ENCODE measurements at regions of chr9 and their contacts with region 1.

Region 1: DNA sequence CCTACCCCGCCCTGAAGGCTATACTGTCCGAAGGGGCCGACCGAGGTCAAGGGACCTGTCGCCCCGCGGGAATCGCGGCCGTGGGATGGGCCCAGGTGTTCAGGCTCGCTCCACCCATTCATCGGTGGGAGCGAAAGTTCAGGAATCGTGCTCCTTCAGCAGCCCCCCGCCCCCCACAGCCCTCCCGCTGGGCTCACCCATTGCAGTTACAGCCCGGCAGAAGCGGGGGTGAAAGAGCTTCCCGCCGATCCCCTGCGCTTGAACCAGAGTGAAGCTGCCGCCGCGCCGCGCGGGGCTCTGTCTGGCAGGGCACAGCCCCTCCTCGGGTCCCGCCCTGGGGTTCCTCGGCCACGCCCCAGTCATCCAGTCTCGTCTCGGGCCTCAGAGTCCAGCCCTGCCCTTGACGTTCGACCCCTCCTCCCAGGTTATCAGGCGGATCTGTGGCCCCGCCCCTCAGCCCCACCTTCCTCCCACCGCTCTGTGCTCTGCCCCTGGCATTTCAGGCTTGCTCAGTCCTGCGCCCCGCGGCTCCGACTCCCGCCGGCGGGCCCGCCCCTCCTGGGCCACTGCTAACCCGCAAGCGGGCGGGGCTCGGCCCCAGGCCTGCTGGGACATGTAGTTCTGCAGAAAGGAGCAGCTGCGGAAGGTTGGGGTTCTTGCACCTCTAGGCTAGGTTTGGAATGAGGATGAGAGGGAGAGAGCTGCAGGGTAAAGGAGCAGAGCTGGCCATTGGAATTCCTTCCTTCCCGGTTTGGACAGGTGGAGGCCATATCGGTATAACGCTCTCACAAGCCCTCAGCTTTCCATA is at the start of gene MYORG:
- DNase-seq: peak; percentile 99
- ATAC-seq: peak; percentile 86
- H3K4me3 Mint-ChIP-seq: peak within 1 kb of the TSS; percentile 87
- H3K27ac Mint-ChIP-seq: peak within 1 kb of the TSS; percentile 82
- H3K4me1 Mint-ChIP-seq: peaks cover 30% of the 10 kb centered on the region
- H3K27me3 Mint-ChIP-seq: no peaks in the 10 kb centered on the region
- CTCF ChIP-seq: no peak
- total RNA-seq, gene MYORG: 4.1 to 5.5 TPM

Region 2: GRCh38 chr9:34048923-34049697 is 327.7 kb before region 1 on chr9:
- CTCF ChIA-PET with region 1: interaction called, 3 read pairs
- POLR2A ChIA-PET with region 1: interaction called, 5 read pairs
- intact Hi-C with region 1: loop called (anchors 10 kb)
- DNase-seq: peak; percentile 98
- ATAC-seq: peak; percentile 83
- H3K4me3 Mint-ChIP-seq: peak overlapping the region; percentile 87
- H3K27ac Mint-ChIP-seq: peak overlapping the region; percentile 100
- H3K4me1 Mint-ChIP-seq: peaks cover 28% of the 10 kb centered on the region
- H3K27me3 Mint-ChIP-seq: no peaks in the 10 kb centered on the region
- CTCF ChIP-seq: no peak

Region 3: DNA sequence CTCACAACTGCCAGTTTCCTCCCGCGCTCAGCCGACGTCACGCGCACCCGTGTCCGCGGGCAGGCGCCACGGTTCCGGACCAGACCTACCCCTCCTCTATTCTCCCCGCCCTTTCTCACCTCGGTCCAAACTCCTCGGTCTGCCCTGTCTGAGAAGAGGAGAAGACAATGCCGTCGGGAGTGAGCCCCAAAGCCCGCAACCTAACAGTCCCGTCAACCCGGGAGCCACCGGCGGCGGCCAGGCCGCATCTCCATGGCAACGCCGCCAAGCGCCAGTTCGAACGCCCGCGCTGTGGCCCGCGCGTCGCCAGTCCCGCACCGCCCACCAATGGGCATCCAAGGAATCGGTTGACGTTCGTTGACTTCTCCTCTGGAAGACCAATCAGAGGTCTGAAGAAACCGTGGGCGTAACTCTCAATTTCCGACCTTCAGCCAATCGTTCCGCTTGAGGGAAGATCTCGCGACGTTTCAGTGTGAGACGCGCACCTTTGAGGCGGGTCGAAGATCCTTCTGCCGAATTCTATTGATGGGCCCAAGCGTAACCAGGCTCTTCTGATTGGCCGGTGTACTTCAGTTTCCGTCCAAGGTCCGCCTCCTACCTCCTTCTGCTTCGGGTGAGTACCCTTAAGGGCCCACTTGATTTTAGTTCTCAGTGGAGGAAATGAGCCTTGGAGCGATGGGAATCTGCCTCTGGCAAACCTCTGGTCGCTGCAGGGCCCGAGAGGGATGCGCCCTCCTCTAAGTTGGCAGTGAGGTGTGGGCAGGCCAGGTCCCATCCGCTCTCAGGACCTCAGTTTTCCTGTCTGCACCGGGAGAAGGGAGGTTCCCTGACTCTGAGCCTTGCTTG is 47.6 kb before region 1 on chr9 and contains the starts of genes KIF24 and NUDT2:
- CTCF ChIA-PET with region 1: interaction called, 117 read pairs
- POLR2A ChIA-PET with region 1: interaction called, 14 read pairs
- intact Hi-C with region 1: loop called (anchors 1 kb)
- DNase-seq: peak; percentile 98
- ATAC-seq: peak; percentile 95
- H3K4me3 Mint-ChIP-seq: peak within 1 kb of the TSS; percentile 95
- H3K27ac Mint-ChIP-seq: peak within 1 kb of the TSS; percentile 98
- H3K4me1 Mint-ChIP-seq: peaks cover 24% of the 10 kb centered on the region
- H3K27me3 Mint-ChIP-seq: no peaks in the 10 kb centered on the region
- CTCF ChIP-seq: no peak
- total RNA-seq, gene KIF24: 5.8 to 5.9 TPM
- total RNA-seq, gene NUDT2: 35.3 to 38.4 TPM

Region 4: DNA sequence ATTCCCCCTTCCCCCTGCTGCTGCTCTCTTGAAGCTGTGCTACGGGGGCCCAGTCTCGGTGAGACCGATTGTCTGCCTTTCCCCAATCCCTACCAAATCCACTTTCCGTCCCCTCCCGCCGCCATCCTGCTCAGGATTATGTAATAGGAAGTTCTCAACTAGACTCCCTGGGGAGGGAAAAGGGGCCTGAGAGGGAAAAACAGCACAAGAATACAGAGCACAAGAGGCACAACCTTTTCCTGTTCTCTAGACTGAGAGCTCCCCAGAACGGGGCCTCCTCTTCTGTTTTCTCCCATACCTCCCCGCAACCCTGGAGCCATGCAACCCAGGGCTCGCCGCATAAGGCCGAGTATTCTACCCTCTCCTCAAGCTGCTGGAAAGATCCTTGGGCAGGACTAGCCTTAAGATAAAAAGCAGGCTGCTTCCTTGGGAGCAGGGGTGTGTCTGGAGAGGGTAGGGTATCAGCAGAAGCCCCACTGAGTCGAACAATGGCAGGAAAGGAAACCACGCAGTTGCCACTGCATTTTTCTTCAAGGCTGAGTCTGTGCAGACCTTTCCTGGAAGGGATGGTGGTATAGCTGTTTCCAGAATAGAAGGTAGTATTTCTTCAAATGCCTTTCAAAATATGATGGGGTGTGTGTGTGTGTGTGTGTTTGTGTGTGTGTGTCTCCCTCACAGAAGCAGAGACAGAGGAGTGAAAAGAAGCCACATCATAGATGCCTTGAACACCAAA is 13.0 kb before region 1 on chr9:
- CTCF ChIA-PET with region 1: interaction called, 10 read pairs
- POLR2A ChIA-PET with region 1: interaction called, 3 read pairs
- intact Hi-C with region 1: no loop called
- DNase-seq: peak; percentile 12
- ATAC-seq: peak; percentile 61
- H3K4me3 Mint-ChIP-seq: no peak overlapping the region
- H3K27ac Mint-ChIP-seq: no peak overlapping the region
- H3K4me1 Mint-ChIP-seq: peaks cover 9% of the 10 kb centered on the region
- H3K27me3 Mint-ChIP-seq: no peaks in the 10 kb centered on the region
- CTCF ChIP-seq: no peak